Activated CD8-positive, alpha-beta T cell treated with anti-CD3 and anti-CD28 coated beads for 36 hours (primary cell): ENCODE measurements at regions of chr1 and their contacts with region 1.

Region 1: GRCh38 chr1:206684478-206685333 is at the start of gene MAPKAPK2:
- DNase-seq: peak; percentile 82
- ATAC-seq: peak; percentile 75
- H3K4me3 Mint-ChIP-seq: peak within 1 kb of the TSS; percentile 99
- H3K27ac Mint-ChIP-seq: peak within 1 kb of the TSS; percentile 96
- H3K4me1 Mint-ChIP-seq: peaks cover 54% of the 10 kb centered on the region
- H3K27me3 Mint-ChIP-seq: no peaks in the 10 kb centered on the region
- CTCF ChIP-seq: no peak
- total RNA-seq, gene MAPKAPK2: 50.4 to 51.4 TPM

Region 2: GRCh38 chr1:206658264-206658980 is 26.3 kb before region 1 on chr1:
- CTCF ChIA-PET with region 1: interaction called, 34 read pairs
- POLR2A ChIA-PET with region 1: interaction called, 3 read pairs
- intact Hi-C with region 1: no loop called
- DNase-seq: peak; percentile 67
- ATAC-seq: peak; percentile 84
- H3K4me3 Mint-ChIP-seq: no peak overlapping the region
- H3K27ac Mint-ChIP-seq: peak overlapping the region; percentile 42
- H3K4me1 Mint-ChIP-seq: peaks cover 29% of the 10 kb centered on the region
- H3K27me3 Mint-ChIP-seq: peaks cover 31% of the 10 kb centered on the region
- CTCF ChIP-seq: peak; percentile 99